Calu3 (cell line): ENCODE measurements at regions of chr11 and their contacts with region 1.

Region 1: DNA sequence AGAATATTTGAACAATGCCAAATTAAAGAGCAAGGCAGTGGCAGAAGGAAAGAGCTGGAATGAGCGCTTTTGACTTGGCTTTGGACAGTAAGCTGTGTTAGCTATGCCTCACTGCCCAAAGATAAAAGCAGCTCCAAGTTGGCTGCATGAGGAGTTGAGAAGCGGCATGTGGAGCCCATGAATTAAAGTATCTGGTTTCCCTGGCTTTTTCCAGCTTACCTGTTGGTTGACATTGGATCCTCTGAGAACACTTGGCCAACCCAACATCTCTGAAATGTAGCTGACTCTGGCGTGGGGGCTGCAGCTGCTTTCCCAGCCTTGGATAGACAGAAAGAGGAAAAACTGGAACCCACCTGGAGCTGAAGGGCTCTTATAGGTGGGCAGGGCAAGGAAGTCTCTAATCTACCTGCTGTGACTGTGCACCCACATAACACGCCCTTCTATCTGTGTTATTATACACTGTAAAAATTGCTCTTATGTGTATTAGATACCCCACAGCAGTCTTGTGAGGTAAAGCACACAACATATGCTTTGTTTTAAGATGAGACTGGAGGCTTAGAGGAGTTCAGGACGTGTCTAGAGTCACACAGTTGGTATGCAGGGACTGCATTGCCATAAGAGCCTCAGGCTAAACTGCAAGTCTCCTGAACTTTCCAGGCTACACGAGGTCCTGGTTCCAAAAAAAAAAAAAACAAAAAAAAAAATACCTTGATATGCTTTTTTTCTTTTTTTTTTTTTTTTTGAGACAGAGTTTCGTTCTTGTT is 5.8 kb downstream of the UBASH3B start:
- DNase-seq: peak; percentile 6
- H3K4me3 Mint-ChIP-seq: peak overlapping the region; percentile 6
- H3K27ac Mint-ChIP-seq: no peak overlapping the region
- H3K4me1 Mint-ChIP-seq: peaks cover 18% of the 10 kb centered on the region
- H3K27me3 Mint-ChIP-seq: no peaks in the 10 kb centered on the region
- CTCF ChIP-seq: no peak

Region 2: GRCh38 chr11:122642472-122642922 is 18.9 kb before region 1 on chr11:
- CTCF ChIA-PET with region 1: interaction called, 5 read pairs
- intact Hi-C with region 1: loop called (anchors 2 kb)
- DNase-seq: peak; percentile 59
- H3K4me3 Mint-ChIP-seq: peak overlapping the region; percentile 44
- H3K27ac Mint-ChIP-seq: peak overlapping the region; percentile 95
- H3K4me1 Mint-ChIP-seq: peaks cover 35% of the 10 kb centered on the region
- H3K27me3 Mint-ChIP-seq: no peaks in the 10 kb centered on the region
- CTCF ChIP-seq: no peak